ENCODE measurements at regions of chr1 and their contacts with region 1.

Region 1: GRCh38 chr1:162889989-162890388 is 29.0 kb upstream of the CCDC190 start:
- DNase-seq: peak; percentile 68
- H3K4me3 ChIP-seq: no peak overlapping the region
- H3K27ac ChIP-seq: peak overlapping the region in 1 of 2 experiments; percentile 100; a peak in 2 of 4 replicates
- H3K4me1 ChIP-seq: peaks cover 0 to 68% of the 10 kb centered on the region in 2 experiments; a peak in 3 of 4 replicates
- H3K27me3 ChIP-seq: no peaks in the 10 kb centered on the region
- CTCF ChIP-seq: no peak
- EP300 ChIP-seq: peak; percentile 51 to 100; a peak in 3 of 4 replicates
- RAD21 ChIP-seq: peak; percentile 52

Region 2: GRCh38 chr1:162846256-162847219 is 43.5 kb before region 1 on chr1:
- CTCF ChIA-PET with region 1: no interaction called
- POLR2A ChIA-PET with region 1: no interaction called
- DNase-seq: no peak
- H3K4me3 ChIP-seq: no peak overlapping the region
- H3K27ac ChIP-seq: no peak overlapping the region
- H3K4me1 ChIP-seq: peaks cover 14 to 31% of the 10 kb centered on the region in 2 experiments
- H3K27me3 ChIP-seq: no peaks in the 10 kb centered on the region
- CTCF ChIP-seq: no peak
- EP300 ChIP-seq: no peak
- RAD21 ChIP-seq: no peak

Region 3: DNA sequence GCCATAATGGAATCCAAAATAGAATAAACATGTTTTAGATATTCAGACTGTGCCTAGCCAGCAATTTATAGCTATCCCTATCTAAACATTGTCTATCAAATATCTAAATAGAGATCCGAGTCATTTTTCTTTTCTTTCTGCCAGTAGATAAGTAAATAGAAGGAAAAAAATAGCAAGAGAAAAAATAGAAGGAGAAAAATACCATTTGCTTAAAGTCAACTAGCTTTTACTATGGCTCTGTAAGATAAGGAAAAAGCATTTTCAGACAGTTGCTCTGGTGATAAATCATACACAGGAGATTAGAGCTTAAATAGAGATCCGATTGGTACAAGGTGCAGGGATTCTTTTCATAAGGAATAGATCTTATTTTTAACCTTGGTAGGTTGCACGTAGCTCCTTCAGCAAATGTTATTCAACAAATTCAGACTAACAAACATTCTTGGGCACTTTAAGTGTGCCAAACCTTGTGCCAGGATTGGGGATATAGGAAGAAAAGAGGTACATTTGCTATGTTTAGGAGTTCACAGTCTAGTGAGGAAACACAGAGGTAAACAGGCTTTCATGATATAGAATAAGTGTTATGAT is 41.1 kb after region 1 on chr1:
- CTCF ChIA-PET with region 1: interaction called, 8 read pairs
- POLR2A ChIA-PET with region 1: interaction called, 30 read pairs
- DNase-seq: no peak
- H3K4me3 ChIP-seq: no peak overlapping the region
- H3K27ac ChIP-seq: peak overlapping the region; percentile 9 to 99; a peak in 3 of 4 replicates
- H3K4me1 ChIP-seq: peaks cover 0 to 53% of the 10 kb centered on the region in 2 experiments; a peak in 2 of 4 replicates
- H3K27me3 ChIP-seq: no peaks in the 10 kb centered on the region
- CTCF ChIP-seq: no peak
- EP300 ChIP-seq: peak in 1 of 2 experiments; percentile 34; a peak in 1 of 4 replicates
- RAD21 ChIP-seq: no peak

Region 4: DNA sequence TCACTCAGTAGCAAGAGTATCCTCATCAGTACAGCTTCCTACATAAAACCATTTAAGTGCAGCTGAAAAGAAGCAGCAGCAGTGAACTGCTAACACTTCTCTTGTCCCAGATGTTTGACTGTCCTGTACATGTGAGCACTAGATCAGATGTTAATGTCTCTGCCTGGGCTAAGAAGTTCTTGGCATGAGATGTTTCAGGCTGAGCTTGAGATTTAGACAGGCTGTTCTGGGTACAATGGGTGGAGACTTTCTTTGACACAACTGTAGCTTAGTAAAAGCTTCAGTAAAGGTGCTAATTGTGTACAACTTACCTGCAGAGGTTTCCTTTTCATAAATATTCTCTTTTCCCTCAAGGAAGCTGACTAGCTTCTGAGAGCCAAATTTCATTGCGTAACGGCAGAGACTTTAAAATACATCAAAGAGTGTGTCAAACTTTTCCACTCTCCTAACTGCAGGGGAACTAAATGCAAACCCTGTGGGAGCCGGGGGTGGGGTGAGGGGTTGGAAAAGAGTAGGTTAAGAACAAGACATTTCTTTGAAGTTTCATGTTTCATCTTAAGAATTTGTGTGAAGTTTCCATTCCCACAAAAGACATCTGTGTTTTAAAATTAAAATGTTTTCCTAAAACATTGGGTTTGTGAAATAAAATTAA is 53.1 kb after region 1 on chr1:
- CTCF ChIA-PET with region 1: no interaction called
- POLR2A ChIA-PET with region 1: interaction called, 11 read pairs
- DNase-seq: no peak
- H3K4me3 ChIP-seq: no peak overlapping the region
- H3K27ac ChIP-seq: peak overlapping the region in 1 of 2 experiments; percentile 75; a peak in 2 of 4 replicates
- H3K4me1 ChIP-seq: peaks cover 9 to 36% of the 10 kb centered on the region in 2 experiments; a peak in 3 of 4 replicates
- H3K27me3 ChIP-seq: no peaks in the 10 kb centered on the region
- CTCF ChIP-seq: no peak
- EP300 ChIP-seq: no peak
- RAD21 ChIP-seq: no peak

Region 5: DNA sequence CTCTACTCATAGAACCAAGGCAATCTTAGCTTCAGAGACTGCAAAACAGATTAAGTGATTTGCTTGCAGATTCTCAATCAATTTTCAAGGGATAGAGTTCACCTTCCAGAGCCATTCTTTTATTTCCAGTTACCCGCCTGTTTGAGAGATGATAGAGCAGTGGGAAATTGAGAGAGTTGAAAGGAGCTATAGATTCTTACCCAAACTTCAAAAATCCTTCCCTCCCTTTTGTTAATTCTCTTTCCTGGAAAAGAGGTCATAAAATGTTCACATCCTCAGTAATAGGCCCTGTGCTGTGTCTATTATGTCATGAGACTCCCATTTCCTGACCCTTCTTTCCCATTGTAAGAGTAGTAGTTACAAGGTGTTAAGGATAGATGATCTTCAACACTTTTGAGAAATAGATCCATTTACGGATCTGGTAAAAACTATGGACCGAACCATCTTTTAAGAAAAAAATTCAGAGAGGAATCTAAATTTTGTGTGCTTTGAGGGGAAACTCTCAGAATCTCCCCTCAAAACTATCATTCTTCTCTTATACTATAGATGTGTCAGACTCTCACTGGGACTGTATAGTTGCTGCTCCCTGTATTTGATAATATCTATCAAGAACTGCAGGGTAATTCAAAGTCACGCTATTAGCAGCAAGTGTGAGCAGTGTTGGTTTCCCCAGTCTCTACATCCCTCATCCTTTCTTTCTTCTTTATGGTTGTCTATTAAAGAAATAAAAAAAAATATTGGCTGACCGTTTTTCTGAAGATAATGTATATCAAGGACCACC is 187.2 kb after region 1 on chr1:
- CTCF ChIA-PET with region 1: interaction called, 120 read pairs
- POLR2A ChIA-PET with region 1: interaction called, 450 read pairs
- DNase-seq: no peak
- H3K4me3 ChIP-seq: no peak overlapping the region; a peak in 1 of 4 replicates
- H3K27ac ChIP-seq: peak overlapping the region; percentile 91 to 99
- H3K4me1 ChIP-seq: peaks cover 23 to 29% of the 10 kb centered on the region in 2 experiments; a peak in 3 of 4 replicates
- H3K27me3 ChIP-seq: no peaks in the 10 kb centered on the region
- CTCF ChIP-seq: no peak
- EP300 ChIP-seq: no peak
- RAD21 ChIP-seq: no peak

Region 6: GRCh38 chr1:163195728-163196448 is 305.9 kb after region 1 on chr1:
- CTCF ChIA-PET with region 1: no interaction called
- POLR2A ChIA-PET with region 1: interaction called, 36 read pairs
- DNase-seq: no peak
- H3K4me3 ChIP-seq: peak overlapping the region; percentile 47 to 62
- H3K27ac ChIP-seq: peak overlapping the region; percentile 79 to 99
- H3K4me1 ChIP-seq: peaks cover 5 to 56% of the 10 kb centered on the region in 2 experiments; a peak in 2 of 4 replicates
- H3K27me3 ChIP-seq: no peaks in the 10 kb centered on the region
- CTCF ChIP-seq: no peak
- EP300 ChIP-seq: peak; percentile 82 to 100
- RAD21 ChIP-seq: 0 out of 2 replicates have a peak, but pooled peaks have one; percentile 3